Activated T-helper 1 cell treated with anti-CD3 and anti-CD28 coated beads, Interleukin-12 subunit alpha, Interleukin-12 subunit beta, Interleukin-2, Interleukin-4 antibody, amounts not matched to agents 30 ng/mL and 10 ng/mL and 1 ng/mL, durations not matched to agents 14 hours and 24 hours and 36 hours (primary cell): ENCODE measurements at regions of chr17 and their contacts with region 1.

Region 1: GRCh38 chr17:49230636-49231562 is at the start of gene PHOSPHO1:
- DNase-seq: peak; percentile 82
- H3K4me3 Mint-ChIP-seq: peak within 1 kb of the TSS; percentile 87
- H3K27ac Mint-ChIP-seq: no peak within 1 kb of the TSS
- H3K4me1 Mint-ChIP-seq: peaks cover 24% of the 10 kb centered on the region
- H3K27me3 Mint-ChIP-seq: peaks cover 37% of the 10 kb centered on the region
- total RNA-seq, gene PHOSPHO1: 0.37 TPM in 1 of 2 replicates, not detected in the other

Region 2: DNA sequence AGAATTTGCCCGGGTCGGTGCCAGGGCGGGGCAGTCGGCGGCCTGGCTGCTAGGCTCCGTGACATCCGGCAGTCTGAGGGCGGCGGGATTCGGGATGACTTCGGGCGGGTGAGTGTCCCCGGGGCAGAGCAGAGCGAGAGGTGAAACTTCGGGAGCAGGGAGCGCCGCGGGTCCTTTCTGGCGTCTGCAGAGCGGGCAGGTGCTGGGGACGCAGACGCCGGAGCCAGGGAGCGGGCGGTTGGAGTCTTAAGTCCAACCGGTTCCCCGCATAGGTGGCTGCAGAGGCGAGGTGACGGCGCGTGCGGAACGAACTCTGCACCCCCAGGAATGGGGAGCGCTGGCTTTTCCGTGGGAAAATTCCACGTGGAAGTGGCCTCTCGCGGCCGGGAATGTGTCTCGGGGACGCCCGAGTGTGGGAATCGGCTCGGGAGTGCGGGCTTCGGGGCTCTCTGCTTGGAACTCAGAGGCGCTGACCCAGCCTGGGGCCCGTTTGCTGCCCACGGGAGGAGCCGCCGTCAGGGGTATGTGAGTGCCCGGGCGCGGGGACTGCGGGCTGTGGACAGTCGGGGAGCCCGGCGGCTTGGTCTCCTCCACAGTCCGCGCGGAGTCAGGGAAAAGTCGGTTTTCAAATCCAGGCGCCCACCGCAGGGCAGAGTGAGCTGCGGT is 98.1 kb before region 1 on chr17 and contains the start of gene B4GALNT2:
- intact Hi-C with region 1: loop called (anchors 5 kb)
- DNase-seq: peak; percentile 1
- H3K4me3 Mint-ChIP-seq: no peak within 1 kb of the TSS
- H3K27ac Mint-ChIP-seq: no peak within 1 kb of the TSS
- H3K4me1 Mint-ChIP-seq: peaks cover 6% of the 10 kb centered on the region
- H3K27me3 Mint-ChIP-seq: peaks cover 76% of the 10 kb centered on the region
- total RNA-seq, gene B4GALNT2: 0.03 and 0.05 TPM in 2 replicates

Region 3: GRCh38 chr17:49210158-49211029 is 20.5 kb before region 1 on chr17 and contains the starts of genes ABI3 and GNGT2:
- intact Hi-C with region 1: loop called (anchors 2 kb)
- DNase-seq: peak; percentile 65
- H3K4me3 Mint-ChIP-seq: peak within 1 kb of the TSS; percentile 96
- H3K27ac Mint-ChIP-seq: peak within 1 kb of the TSS; percentile 88
- H3K4me1 Mint-ChIP-seq: peaks cover 63% of the 10 kb centered on the region
- H3K27me3 Mint-ChIP-seq: no peaks in the 10 kb centered on the region
- total RNA-seq, gene ABI3: 32.8 and 33.0 TPM in 2 replicates
- total RNA-seq, gene GNGT2: 16.5 and 18.4 TPM in 2 replicates

Region 4: DNA sequence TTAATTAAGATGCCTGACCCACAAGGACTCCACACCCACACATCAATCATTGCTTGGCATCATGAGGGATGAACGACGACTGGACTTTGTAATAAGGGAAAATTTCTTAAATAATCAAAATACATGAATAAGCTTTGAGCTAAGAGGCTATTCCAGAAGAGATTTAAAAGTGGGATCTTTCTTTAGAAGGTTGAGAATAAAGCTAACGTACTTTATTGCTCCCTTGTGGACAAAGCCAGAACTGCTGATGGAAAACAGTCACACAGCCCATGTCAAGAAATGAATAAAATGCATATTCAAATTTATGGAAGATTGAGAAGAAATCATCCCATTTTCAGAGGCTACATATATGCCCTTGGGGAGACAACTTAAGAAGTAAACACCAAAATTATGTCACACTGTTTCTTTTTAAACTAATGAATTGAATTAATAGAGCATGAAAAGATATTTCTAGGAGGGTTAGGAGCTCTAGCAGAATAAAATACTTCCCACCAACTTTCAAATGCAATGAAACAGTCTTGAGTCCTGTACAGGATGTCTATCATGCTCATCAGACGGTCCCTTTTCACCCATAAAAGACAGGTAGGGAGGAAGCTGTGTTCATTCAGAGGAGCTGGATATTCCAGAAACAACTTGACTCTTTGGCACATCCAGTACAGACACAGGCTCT is 59.9 kb after region 1 on chr17:
- intact Hi-C with region 1: loop called (anchors 5 kb)
- DNase-seq: no peak
- H3K4me3 Mint-ChIP-seq: no peak overlapping the region
- H3K27ac Mint-ChIP-seq: no peak overlapping the region
- H3K4me1 Mint-ChIP-seq: no peaks in the 10 kb centered on the region
- H3K27me3 Mint-ChIP-seq: no peaks in the 10 kb centered on the region

Region 5: DNA sequence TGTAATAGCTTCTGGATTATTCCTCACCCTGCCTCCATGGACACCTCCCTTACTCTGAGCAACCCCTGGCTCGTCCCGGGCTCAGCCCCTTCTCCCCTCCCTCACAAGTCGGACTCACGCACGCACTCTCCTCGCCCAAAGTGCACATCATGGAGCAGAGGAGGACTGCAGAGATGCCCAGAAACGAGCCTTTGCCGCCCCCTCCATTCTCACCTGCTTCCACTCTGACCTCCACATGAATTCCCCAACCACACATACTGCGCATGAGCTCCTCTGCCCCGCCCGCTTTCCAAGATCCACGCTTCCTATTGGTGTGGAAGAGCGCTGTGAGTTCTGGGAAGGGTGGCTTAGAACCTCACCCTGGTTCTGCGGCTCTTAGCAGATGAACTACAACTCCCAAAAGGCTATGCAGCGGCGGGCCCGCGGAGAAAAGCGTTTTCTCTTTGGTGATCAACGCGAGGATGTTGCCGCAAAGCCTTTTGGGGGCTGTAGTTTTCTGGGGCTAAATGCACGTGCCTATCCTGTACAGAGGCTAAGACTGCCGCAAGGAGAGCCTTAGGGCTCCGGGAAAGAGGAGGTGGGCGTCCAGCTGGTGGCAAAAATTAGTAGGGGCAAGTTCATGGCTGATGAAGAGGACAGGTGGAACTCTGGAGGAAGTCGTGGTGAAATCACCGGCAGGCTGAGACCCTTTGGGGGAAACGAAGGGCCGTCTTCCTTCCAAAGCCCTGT is 183.9 kb after region 1 on chr17 and contains the start of gene PHB1:
- intact Hi-C with region 1: loop called (anchors 5 kb)
- DNase-seq: peak; percentile 93
- H3K4me3 Mint-ChIP-seq: peak within 1 kb of the TSS; percentile 98
- H3K27ac Mint-ChIP-seq: peak within 1 kb of the TSS; percentile 95
- H3K4me1 Mint-ChIP-seq: peaks cover 9% of the 10 kb centered on the region
- H3K27me3 Mint-ChIP-seq: peaks cover 3% of the 10 kb centered on the region
- total RNA-seq, gene PHB1: 395 and 401 TPM in 2 replicates